GM12878 (cell line): ENCODE measurements at regions of chr5 and their contacts with region 1.

Region 1: DNA sequence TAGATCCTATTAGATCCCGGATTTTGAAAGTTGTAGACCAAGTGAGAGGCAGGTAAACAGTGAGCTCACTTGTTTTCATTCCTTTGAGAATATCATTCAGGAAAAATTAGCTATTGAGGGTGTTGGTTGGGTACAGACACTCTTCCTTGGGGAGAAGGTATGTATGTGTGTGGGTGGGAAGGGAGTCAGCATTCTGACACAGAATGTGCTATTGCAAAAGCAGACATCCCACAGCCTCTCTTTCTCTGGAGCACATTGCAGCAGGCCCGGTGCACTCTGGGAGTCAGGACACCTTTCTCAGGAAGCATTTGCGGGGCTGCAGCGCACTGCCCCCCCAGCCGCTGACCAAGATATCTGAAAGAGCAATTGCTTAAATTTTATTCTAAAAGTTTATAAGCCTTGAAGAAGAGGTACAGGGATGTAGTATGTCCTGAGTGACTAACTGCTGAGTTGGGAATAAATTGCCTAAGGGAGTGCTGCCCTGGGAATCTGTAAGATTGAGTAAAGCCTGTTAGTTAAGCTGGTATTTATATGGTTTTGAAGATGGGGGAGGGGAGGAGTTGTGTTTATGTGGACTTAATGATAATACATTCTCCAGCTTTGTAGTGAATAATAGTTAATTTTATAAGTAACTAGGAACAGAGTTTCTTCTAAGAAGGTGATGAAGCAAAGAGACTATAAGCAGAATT is 5.2 kb downstream of the TNFAIP8 start:
- DNase-seq: no peak
- ATAC-seq: no peak
- H3K4me3 ChIP-seq: peak overlapping the region; percentile 96
- H3K27ac ChIP-seq: peak overlapping the region; percentile 3; the same call in 1 of the 2 replicates
- H3K4me1 ChIP-seq: peaks cover 50% of the 10 kb centered on the region
- H3K27me3 ChIP-seq: no peaks in the 10 kb centered on the region
- CTCF ChIP-seq: no peak
- EP300 ChIP-seq: no peak
- POLR2A ChIP-seq: no peak
- RAD21 ChIP-seq: no peak

Region 2: DNA sequence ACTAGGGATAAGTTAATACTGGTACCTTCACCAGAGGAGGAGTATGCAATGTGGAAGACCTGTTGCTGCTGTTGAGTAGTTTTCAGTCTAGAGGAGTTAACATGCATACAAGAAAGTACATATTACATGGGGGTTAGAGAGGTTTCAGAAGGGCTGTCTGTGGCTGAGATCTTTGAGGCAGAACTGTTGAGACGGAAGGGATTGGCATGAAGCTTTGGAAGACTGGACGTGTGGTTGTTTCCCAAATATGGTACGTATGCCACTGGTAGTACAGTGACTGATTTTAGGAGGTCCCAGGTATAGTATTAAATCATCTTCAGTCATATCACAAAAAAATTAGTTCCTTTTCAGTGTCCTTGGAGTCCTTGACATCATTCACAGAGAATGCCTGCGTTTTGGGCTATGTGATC is 12.4 kb after region 1 on chr5:
- CTCF ChIA-PET with region 1: interaction called, 7 read pairs
- POLR2A ChIA-PET with region 1: interaction called, 125 read pairs
- RAD21 ChIA-PET with region 1: interaction called, 77 read pairs
- SMC1A ChIA-PET with region 1: interaction called, 1,117 read pairs
- in situ Hi-C with region 1: no loop called
- intact Hi-C with region 1: no loop called
- DNase-seq: peak; percentile 65
- ATAC-seq: peak; percentile 80
- H3K4me3 ChIP-seq: no peak overlapping the region
- H3K27ac ChIP-seq: peak overlapping the region; percentile 40; the same call in 1 of the 2 replicates
- H3K4me1 ChIP-seq: peaks cover 16% of the 10 kb centered on the region
- H3K27me3 ChIP-seq: no peaks in the 10 kb centered on the region
- CTCF ChIP-seq: no peak
- EP300 ChIP-seq: no peak
- POLR2A ChIP-seq: no peak
- RAD21 ChIP-seq: no peak

Region 3: DNA sequence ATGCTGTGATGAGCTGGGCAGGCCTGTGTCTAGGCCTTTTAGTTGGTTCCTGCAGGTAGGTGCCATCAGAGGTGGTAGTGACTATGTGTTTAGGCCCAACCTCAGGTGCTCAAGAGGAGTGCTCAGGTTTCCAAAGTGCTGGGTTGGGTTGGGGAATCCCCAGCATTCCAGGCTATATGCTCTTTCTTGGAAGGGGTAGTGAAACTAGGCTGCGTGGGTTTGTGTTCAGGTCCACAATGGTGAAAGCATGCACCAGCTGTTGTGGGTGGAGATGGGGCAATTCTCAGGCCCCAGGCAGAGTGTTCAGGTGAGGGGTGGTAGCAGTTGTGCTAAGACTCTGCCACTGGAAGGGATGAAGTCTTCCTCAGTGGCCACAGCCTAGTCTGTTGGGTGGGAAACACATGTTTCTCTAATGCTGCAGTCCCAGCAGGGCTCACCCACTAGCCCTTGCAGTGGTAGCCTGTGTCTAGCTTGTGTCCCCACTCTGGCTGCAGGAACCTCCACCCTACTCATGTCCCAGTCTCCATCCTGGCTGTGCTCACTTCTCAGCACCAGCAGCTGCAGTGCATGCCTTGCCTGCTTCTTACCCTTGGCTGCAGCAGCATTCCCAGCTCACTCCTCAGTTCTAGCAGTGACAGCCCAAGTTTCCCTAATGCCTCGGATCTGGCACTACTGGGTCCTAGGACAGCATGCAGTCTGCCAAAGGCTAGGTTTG is 347.2 kb after region 1 on chr5:
- CTCF ChIA-PET with region 1: no interaction called
- POLR2A ChIA-PET with region 1: no interaction called
- RAD21 ChIA-PET with region 1: no interaction called
- SMC1A ChIA-PET with region 1: no interaction called
- in situ Hi-C with region 1: no loop called
- intact Hi-C with region 1: no loop called
- DNase-seq: no peak
- ATAC-seq: no peak; the same call in 2 of the 3 replicates
- H3K4me3 ChIP-seq: no peak overlapping the region
- H3K27ac ChIP-seq: no peak overlapping the region
- H3K4me1 ChIP-seq: no peaks in the 10 kb centered on the region; the same call in 1 of the 2 replicates
- H3K27me3 ChIP-seq: no peaks in the 10 kb centered on the region
- CTCF ChIP-seq: no peak
- EP300 ChIP-seq: no peak
- POLR2A ChIP-seq: no peak
- RAD21 ChIP-seq: no peak